ENCODE measurements at regions of chr3 and their contacts with region 1.

Region 1: DNA sequence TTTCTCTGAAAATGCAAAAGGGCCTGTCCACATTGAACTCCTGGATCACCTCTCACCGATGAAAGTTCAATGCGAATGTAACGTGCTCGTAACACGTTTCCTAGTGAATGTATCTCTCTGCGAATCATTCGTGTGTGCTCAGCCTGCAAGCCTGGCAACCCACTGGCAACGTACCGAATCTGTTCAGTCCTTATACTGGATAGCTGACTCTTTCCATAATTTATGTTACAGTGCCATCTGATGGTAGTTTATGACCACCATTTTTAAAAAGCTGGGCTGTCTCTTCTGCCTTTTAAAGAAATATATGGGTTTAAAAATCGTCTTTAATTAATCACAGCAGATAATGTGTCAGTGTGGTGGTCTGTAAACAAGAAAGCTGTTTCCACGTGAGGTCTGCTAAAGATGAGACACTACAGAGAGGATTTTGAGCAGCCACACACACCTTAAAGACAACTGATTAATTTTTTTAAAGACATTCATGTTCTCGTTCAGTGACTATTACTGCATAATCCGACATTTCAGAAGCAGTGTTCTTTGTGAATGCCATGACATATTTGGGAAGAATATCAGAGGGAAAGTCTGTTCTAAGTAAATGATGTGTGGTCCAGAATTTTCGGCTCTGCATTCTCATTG is 69.4 kb upstream of the FOXP1 start:
- DNase-seq: peak in 1 of 2 donors; percentile 28
- ATAC-seq: peak; percentile 56 to 83 (median 72)
- H3K4me3 ChIP-seq: no peak overlapping the region
- H3K27ac ChIP-seq: no peak overlapping the region
- H3K4me1 ChIP-seq: peaks cover 3% of the 10 kb centered on the region
- H3K27me3 ChIP-seq: no peaks in the 10 kb centered on the region
- CTCF ChIP-seq: peak; percentile 58

Region 2: GRCh38 chr3:70064194-70064779 is 1588.6 kb before region 1 on chr3:
- intact Hi-C with region 1: loop called (anchors 5 to 10 kb)
- DNase-seq: no peak
- ATAC-seq: peak in 1 of 4 donors; percentile 33
- H3K4me3 ChIP-seq: no peak overlapping the region
- H3K27ac ChIP-seq: no peak overlapping the region
- H3K4me1 ChIP-seq: no peaks in the 10 kb centered on the region
- H3K27me3 ChIP-seq: no peaks in the 10 kb centered on the region
- CTCF ChIP-seq: peak; percentile 61

Region 3: DNA sequence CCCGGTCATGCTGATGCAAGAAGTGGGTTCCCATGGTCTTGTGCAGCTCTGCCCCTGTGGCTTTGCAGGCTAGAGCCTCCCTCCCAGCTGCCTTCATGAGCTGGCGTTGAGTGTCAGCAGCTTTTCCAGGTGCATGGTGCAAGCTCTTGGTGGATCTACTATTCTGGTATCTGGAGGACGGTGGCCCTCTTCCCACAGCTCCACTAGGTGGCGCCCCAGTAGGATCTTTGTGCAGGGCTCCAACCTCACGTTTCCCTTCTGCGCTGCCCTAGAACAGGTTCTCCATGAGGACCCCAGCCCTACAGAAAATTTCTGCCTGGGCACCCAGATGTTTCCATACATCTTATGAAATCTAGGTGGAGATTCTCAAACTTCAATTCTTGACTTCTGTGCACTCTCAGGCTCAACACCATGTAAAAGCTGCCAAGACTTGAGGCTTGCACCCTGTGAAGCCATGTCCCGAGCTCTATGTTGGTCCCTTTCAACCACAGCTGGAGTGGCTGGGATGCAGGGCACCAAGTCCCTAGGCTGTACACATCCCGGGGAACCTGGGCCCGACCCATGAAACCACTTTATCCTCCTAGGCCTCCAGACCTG is 1102.1 kb before region 1 on chr3:
- intact Hi-C with region 1: loop called (anchors 2 to 5 kb)
- DNase-seq: peak; percentile 65 to 75
- ATAC-seq: peak in 3 of 4 donors; percentile 55 to 81 (median 68)
- H3K4me3 ChIP-seq: no peak overlapping the region
- H3K27ac ChIP-seq: no peak overlapping the region
- H3K4me1 ChIP-seq: no peaks in the 10 kb centered on the region
- H3K27me3 ChIP-seq: no peaks in the 10 kb centered on the region
- CTCF ChIP-seq: peak; percentile 65

Measured in psoas muscle (tissue), 8 donors.